HepG2 (cell line): ENCODE measurements at regions of chr6 and their contacts with region 1.

Region 1: GRCh38 chr6:43075670-43076463 is at the start of gene PTK7:
- DNase-seq: peak; percentile 74
- ATAC-seq: peak; percentile 73
- H3K4me3 ChIP-seq: peak within 1 kb of the TSS; percentile 99 to 100 (median 100)
- H3K27ac ChIP-seq: peak within 1 kb of the TSS; percentile 84
- H3K4me1 ChIP-seq: peaks cover 42% of the 10 kb centered on the region
- H3K27me3 ChIP-seq: no peaks in the 10 kb centered on the region; a peak in 1 of 5 replicates
- CTCF ChIP-seq: no peak
- EP300 ChIP-seq: no peak
- POLR2A ChIP-seq: peak in 1 of 2 experiments; percentile 74; a peak in 2 of 4 replicates
- RAD21 ChIP-seq: no peak
- total RNA-seq, gene PTK7: 48.5 and 99.8 TPM in 2 replicates

Region 2: DNA sequence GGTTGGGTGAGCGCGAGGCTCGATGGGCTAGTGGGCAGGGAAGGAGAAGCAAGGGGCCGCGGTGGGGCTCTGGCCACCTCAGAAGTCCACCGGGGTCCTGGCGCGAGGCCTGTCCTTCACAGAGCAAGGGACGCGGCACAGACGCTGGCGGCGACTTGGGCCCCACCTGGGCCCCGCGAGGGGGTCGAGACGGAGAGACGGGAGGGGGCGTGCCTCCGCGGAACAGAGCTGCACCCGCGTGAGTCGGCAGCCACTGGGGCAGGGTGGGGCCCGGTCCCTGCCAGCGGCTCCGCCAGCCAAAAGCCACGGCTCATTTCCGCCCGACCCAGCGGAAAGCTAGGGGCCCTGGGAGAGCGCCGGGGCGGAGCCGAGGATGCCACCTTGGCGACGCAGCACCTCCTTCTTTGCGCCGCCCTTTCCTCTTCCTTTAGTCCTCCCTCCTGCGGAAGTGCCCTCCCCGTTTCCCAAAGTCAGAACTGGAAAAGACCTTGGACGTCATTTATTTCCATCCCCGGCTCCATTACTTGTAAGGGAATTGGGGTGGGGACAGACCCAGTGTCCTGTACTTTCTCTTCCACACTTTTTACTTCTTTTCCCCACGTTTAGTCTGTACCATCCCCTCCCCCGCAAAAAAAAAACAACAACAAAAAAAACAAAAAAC is 22.2 kb before region 1 on chr6 and contains the start of gene CUL7:
- CTCF ChIA-PET with region 1: no interaction called
- POLR2A ChIA-PET with region 1: interaction called, 103 read pairs
- in situ Hi-C with region 1: no loop called
- intact Hi-C with region 1: loop called (anchors 2 kb)
- DNase-seq: peak; percentile 91
- ATAC-seq: peak; percentile 95
- H3K4me3 ChIP-seq: peak within 1 kb of the TSS; percentile 75 to 96 (median 94)
- H3K27ac ChIP-seq: peak within 1 kb of the TSS; percentile 84
- H3K4me1 ChIP-seq: peaks cover 49% of the 10 kb centered on the region
- H3K27me3 ChIP-seq: no peaks in the 10 kb centered on the region; a peak in 1 of 5 replicates
- CTCF ChIP-seq: no peak
- EP300 ChIP-seq: 0 out of 4 replicates have a peak, but pooled peaks of 1 of the 2 experiments have one; percentile 2
- POLR2A ChIP-seq: peak in 1 of 2 experiments; percentile 95; a peak in 2 of 4 replicates
- RAD21 ChIP-seq: peak; percentile 74
- total RNA-seq, gene CUL7: 30.7 and 32.0 TPM in 2 replicates

Region 3: GRCh38 chr6:43089874-43090558 is 14.1 kb after region 1 on chr6:
- CTCF ChIA-PET with region 1: no interaction called
- POLR2A ChIA-PET with region 1: interaction called, 67 read pairs
- in situ Hi-C with region 1: no loop called
- intact Hi-C with region 1: no loop called
- DNase-seq: peak; percentile 95
- ATAC-seq: peak; percentile 84
- H3K4me3 ChIP-seq: peak overlapping the region; percentile 57 to 74 (median 57)
- H3K27ac ChIP-seq: peak overlapping the region; percentile 92
- H3K4me1 ChIP-seq: peaks cover 85% of the 10 kb centered on the region
- H3K27me3 ChIP-seq: no peaks in the 10 kb centered on the region
- CTCF ChIP-seq: no peak
- EP300 ChIP-seq: peak; percentile 88 to 96; a peak in 3 of 4 replicates
- POLR2A ChIP-seq: peak in 1 of 2 experiments; percentile 73; a peak in 2 of 4 replicates
- RAD21 ChIP-seq: no peak; the same call in 1 of the 2 replicates

Region 4: GRCh38 chr6:43096451-43097097 is 20.7 kb after region 1 on chr6:
- CTCF ChIA-PET with region 1: no interaction called
- POLR2A ChIA-PET with region 1: interaction called, 10 read pairs
- in situ Hi-C with region 1: no loop called
- intact Hi-C with region 1: no loop called
- DNase-seq: no peak
- ATAC-seq: peak; percentile 46
- H3K4me3 ChIP-seq: peak overlapping the region in 2 of 3 experiments; percentile 9 to 42; a peak in 1 of 6 replicates
- H3K27ac ChIP-seq: peak overlapping the region; percentile 41
- H3K4me1 ChIP-seq: peaks cover 64% of the 10 kb centered on the region
- H3K27me3 ChIP-seq: no peaks in the 10 kb centered on the region; a peak in 1 of 5 replicates
- CTCF ChIP-seq: no peak
- EP300 ChIP-seq: no peak
- POLR2A ChIP-seq: no peak
- RAD21 ChIP-seq: no peak

Region 5: GRCh38 chr6:43143235-43144124 is 67.6 kb after region 1 on chr6:
- CTCF ChIA-PET with region 1: interaction called, 36 read pairs
- POLR2A ChIA-PET with region 1: interaction called, 8 read pairs
- in situ Hi-C with region 1: loop called (anchors 5 kb)
- intact Hi-C with region 1: loop called (anchors 2 kb)
- DNase-seq: peak; percentile 76
- ATAC-seq: peak; percentile 95
- H3K4me3 ChIP-seq: no peak overlapping the region; a peak in 1 of 6 replicates
- H3K27ac ChIP-seq: no peak overlapping the region
- H3K4me1 ChIP-seq: peaks cover 21% of the 10 kb centered on the region
- H3K27me3 ChIP-seq: no peaks in the 10 kb centered on the region
- CTCF ChIP-seq: peak; percentile 100
- EP300 ChIP-seq: 0 out of 4 replicates have a peak, but pooled peaks of 1 of the 2 experiments have one; percentile 13
- POLR2A ChIP-seq: no peak
- RAD21 ChIP-seq: peak; percentile 100